CD14-positive monocyte (primary cell): ENCODE measurements at regions of chr14 and their contacts with region 1.

Region 1: GRCh38 chr14:91649930-91650329 is 82.0 kb downstream of the CATSPERB start:
- DNase-seq: no peak
- H3K4me3 ChIP-seq: no peak overlapping the region
- H3K4me3 Mint-ChIP-seq: no peak overlapping the region
- H3K27ac ChIP-seq: no peak overlapping the region
- H3K27ac Mint-ChIP-seq: no peak overlapping the region
- H3K4me1 ChIP-seq: no peaks in the 10 kb centered on the region
- H3K4me1 Mint-ChIP-seq: peaks cover 2% of the 10 kb centered on the region
- H3K27me3 ChIP-seq: no peaks in the 10 kb centered on the region
- H3K27me3 Mint-ChIP-seq: peaks cover 0 to 2% (median 0%) of the 10 kb centered on the region in 3 donors
- CTCF ChIP-seq: peak; percentile 63

Region 2: DNA sequence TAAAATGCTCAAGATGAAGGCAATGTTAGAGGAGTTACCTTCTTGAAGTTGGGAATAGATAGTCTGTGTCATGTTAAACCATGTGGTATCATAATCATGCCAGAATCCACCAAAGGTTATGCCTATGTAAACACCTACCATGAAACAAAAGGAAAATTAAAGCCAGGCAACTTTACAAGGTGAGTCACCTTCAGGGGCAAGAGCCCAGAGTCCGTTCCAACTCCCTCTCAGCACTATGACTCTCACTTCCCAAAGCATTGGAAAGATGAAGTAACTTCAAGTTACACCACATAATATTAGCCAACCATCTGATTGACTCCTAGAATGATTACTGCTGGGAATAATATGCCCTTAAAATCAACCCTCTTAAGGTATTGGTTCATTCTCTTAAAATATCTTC is 43.4 kb after region 1 on chr14:
- intact Hi-C with region 1: no loop called
- DNase-seq: peak; percentile 3 to 50 (median 5)
- H3K4me3 ChIP-seq: no peak overlapping the region
- H3K4me3 Mint-ChIP-seq: no peak overlapping the region
- H3K27ac ChIP-seq: no peak overlapping the region
- H3K27ac Mint-ChIP-seq: no peak overlapping the region
- H3K4me1 ChIP-seq: peaks cover 8 to 17% of the 10 kb centered on the region in 2 donors
- H3K4me1 Mint-ChIP-seq: peaks cover 12% of the 10 kb centered on the region
- H3K27me3 ChIP-seq: no peaks in the 10 kb centered on the region
- H3K27me3 Mint-ChIP-seq: peaks cover 5 to 8% (median 8%) of the 10 kb centered on the region in 3 donors
- CTCF ChIP-seq: no peak

Region 3: GRCh38 chr14:91996948-91997371 is 347.0 kb after region 1 on chr14:
- intact Hi-C with region 1: loop called in 1 of 2 experiments (anchors 5 kb)
- DNase-seq: peak in 2 of 3 donors; percentile 7 to 11
- H3K4me3 ChIP-seq: no peak overlapping the region
- H3K4me3 Mint-ChIP-seq: no peak overlapping the region
- H3K27ac ChIP-seq: no peak overlapping the region
- H3K27ac Mint-ChIP-seq: peak overlapping the region in 1 of 7 donors; percentile 70
- H3K4me1 ChIP-seq: no peaks in the 10 kb centered on the region
- H3K4me1 Mint-ChIP-seq: peaks cover 12% of the 10 kb centered on the region
- H3K27me3 ChIP-seq: no peaks in the 10 kb centered on the region
- H3K27me3 Mint-ChIP-seq: no peaks in the 10 kb centered on the region
- CTCF ChIP-seq: peak; percentile 67